Activated naive CD4-positive, alpha-beta T cell treated with anti-CD3 and anti-CD28 coated beads for 36 hours (primary cell): ENCODE measurements at regions of chr12 and their contacts with region 1.

Region 1: DNA sequence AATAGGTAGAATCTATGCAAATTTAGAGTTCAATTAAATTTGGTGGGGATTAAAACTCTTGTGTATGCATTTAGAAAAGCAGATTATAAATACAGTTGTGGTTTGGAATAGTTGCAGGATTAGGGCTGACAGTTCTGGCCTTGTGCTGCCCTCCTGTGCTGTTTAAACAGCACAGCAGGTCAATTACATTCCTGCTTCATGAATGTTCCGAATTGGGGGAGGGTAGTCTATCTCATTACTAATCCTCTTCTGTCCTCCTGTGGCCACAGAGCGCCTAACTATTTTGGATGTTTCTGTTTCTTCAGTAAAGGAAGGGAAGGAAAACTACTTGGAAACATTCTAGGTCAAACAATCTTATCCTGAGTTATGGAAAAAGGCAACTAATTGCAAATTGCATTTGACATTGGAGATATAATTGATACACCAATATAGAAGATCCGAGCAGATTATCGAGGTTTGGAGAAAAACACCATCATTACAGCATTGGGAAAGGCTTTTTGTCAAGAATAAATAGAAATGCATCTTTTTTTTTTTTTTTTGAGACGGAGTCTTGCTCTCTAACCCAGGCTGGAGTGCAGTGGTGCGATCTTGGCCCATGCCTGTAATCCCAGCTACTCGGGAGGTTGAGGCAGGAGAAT is 8.7 kb upstream of the GPR19 start:
- DNase-seq: peak; percentile 60
- H3K4me3 Mint-ChIP-seq: no peak overlapping the region
- H3K27ac Mint-ChIP-seq: no peak overlapping the region
- H3K4me1 Mint-ChIP-seq: peaks cover 23% of the 10 kb centered on the region
- H3K27me3 Mint-ChIP-seq: no peaks in the 10 kb centered on the region

Region 2: GRCh38 chr12:12645485-12645884 is 59.2 kb before region 1 on chr12:
- CTCF ChIA-PET with region 1: interaction called, 18 read pairs
- intact Hi-C with region 1: loop called (anchors 1 kb)
- DNase-seq: peak; percentile 38
- H3K4me3 Mint-ChIP-seq: no peak overlapping the region
- H3K27ac Mint-ChIP-seq: peak overlapping the region; percentile 46
- H3K4me1 Mint-ChIP-seq: peaks cover 14% of the 10 kb centered on the region
- H3K27me3 Mint-ChIP-seq: no peaks in the 10 kb centered on the region

Region 3: GRCh38 chr12:12654691-12655460 is 49.8 kb before region 1 on chr12:
- CTCF ChIA-PET with region 1: interaction called, 12 read pairs
- intact Hi-C with region 1: loop called (anchors 1 kb)
- DNase-seq: no peak
- H3K4me3 Mint-ChIP-seq: no peak overlapping the region
- H3K27ac Mint-ChIP-seq: no peak overlapping the region
- H3K4me1 Mint-ChIP-seq: peaks cover 7% of the 10 kb centered on the region
- H3K27me3 Mint-ChIP-seq: no peaks in the 10 kb centered on the region

Region 4: GRCh38 chr12:12661086-12661485 is 43.6 kb before region 1 on chr12:
- CTCF ChIA-PET with region 1: interaction called, 12 read pairs
- intact Hi-C with region 1: loop called (anchors 1 kb)
- DNase-seq: no peak
- H3K4me3 Mint-ChIP-seq: no peak overlapping the region
- H3K27ac Mint-ChIP-seq: no peak overlapping the region
- H3K4me1 Mint-ChIP-seq: peaks cover under 1% of the 10 kb centered on the region
- H3K27me3 Mint-ChIP-seq: no peaks in the 10 kb centered on the region

Region 5: DNA sequence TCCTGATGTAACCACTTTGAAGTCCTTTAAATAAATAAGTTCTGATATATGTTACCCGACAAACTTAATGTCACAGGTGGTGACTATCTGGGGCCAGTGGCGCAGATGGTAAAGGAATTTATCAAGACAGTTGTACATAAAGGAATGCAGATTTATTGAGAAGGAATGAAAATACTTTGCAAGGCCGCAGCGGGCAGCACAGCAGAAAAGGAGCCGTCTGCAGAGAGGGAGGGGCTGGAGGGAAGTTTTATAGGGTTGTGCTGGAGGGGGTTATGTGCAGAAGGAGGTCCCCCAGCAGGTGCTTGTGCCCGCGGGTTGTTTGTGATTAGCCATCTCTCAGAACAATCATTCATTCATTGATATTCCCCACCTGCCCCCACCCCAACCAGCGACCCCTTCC is 229.8 kb after region 1 on chr12:
- CTCF ChIA-PET with region 1: no interaction called
- intact Hi-C with region 1: no loop called
- DNase-seq: no peak
- H3K4me3 Mint-ChIP-seq: no peak overlapping the region
- H3K27ac Mint-ChIP-seq: no peak overlapping the region
- H3K4me1 Mint-ChIP-seq: no peaks in the 10 kb centered on the region
- H3K27me3 Mint-ChIP-seq: no peaks in the 10 kb centered on the region